ENCODE measurements at regions of chr4 and their contacts with region 1.

Region 1: DNA sequence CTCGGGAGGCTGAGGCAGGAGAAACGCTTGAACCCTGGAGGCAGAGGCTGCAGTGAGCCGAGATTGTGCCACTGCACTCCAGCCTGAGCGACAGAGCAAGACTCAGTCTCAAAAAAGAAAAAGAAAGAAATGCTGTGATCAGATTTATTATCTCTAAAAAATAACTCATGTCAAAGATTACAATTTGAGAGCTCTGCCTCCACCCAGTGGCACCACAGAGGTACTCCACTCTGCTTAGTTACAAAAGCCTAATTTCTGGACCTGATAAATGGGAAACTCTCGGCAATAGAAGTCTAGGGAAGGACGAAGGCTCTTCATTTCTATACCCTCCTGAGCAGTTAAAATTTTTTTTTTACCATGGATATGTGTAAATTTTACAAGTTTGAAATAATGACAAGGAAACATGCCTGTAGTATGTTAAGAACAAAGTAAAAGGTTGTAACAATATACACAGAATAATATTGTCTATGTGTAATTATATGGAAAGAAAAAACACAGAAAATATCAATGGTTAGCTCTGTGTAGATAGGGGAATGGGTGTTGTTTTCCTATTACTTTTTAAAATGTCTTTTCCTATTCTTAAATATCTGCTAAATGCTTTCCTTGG is 149.8 kb downstream of the STIM2 start:
- DNase-seq: peak; percentile 77
- H3K4me3 Mint-ChIP-seq: no peak overlapping the region
- H3K27ac Mint-ChIP-seq: peak overlapping the region; percentile 53
- H3K4me1 Mint-ChIP-seq: peaks cover 25% of the 10 kb centered on the region
- H3K27me3 Mint-ChIP-seq: no peaks in the 10 kb centered on the region

Region 2: DNA sequence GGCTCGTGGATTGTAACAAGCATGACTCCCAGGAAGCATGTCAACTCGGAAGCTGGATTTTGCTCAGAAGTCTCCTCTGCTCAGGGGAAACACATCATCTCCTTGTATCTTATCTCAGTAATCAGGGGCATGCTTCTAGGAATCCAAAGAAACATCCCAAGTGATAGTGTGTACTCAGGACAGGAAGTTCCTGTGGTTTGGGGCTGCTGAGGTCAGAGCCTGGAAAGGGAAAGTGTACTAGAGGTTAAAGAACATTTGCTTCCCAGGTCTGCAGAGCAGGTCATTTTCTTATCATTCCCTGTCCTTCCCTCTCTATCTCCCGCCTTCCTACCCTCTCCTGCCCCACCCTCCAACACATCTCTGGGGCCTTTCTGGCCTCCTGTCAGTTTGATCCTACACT is 1316.0 kb before region 1 on chr4:
- CTCF ChIA-PET with region 1: no interaction called
- intact Hi-C with region 1: no loop called
- DNase-seq: no peak
- H3K4me3 Mint-ChIP-seq: no peak overlapping the region
- H3K27ac Mint-ChIP-seq: no peak overlapping the region
- H3K4me1 Mint-ChIP-seq: no peaks in the 10 kb centered on the region
- H3K27me3 Mint-ChIP-seq: peaks cover 3% of the 10 kb centered on the region

Region 3: DNA sequence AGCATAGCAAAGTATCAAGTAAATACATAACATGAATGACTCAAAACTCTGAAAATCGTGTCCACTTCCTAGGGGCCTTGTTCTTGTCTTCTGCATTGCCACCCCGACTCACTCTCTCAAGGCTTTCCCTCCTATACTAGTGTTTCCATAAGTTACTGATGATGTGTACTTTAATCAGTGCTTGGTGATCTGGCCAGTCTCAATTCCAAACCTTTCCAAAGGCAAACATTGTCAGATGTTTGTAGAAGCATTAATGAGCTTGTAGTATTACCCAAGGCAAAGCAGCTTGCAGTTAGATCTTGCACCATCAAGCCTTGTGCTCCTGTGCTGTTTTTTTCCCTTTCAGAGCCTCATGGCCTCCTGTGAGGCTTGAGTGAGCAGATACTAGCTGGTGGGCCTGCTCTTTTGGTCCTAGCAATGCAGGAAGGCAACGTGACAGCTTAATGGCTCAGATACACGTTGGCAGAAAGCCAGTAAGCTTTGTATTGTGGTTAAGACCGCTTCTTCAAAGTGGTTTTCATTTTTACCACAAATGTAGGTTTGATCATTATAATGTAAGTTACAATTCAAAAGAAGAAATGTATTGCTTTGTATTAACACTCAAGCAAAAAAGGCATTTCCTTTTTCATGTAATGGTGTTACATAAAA is 637.8 kb before region 1 on chr4:
- CTCF ChIA-PET with region 1: no interaction called
- intact Hi-C with region 1: no loop called
- DNase-seq: peak; percentile 50
- H3K4me3 Mint-ChIP-seq: no peak overlapping the region
- H3K27ac Mint-ChIP-seq: no peak overlapping the region
- H3K4me1 Mint-ChIP-seq: peaks cover 59% of the 10 kb centered on the region
- H3K27me3 Mint-ChIP-seq: no peaks in the 10 kb centered on the region

Region 4: DNA sequence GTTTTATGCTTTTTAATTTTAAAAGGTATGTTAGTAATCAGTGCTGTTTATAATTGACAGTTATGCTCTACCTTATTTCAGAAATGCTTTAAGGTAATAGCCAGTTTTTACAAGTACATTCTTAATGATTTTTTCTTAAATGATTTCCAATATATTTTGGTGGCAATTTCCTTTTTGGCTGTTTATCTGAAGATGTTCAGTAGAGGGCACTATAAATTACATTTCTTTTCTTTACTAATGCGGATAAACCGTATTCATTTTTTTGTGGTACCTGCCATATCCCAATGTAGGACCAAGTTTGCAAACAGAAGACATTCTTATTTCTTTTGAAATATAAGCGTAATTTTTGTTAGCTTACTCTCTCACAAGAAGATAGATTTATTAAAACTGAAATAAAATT is 585.6 kb before region 1 on chr4:
- CTCF ChIA-PET with region 1: no interaction called
- intact Hi-C with region 1: loop called (anchors 5 kb)
- DNase-seq: no peak
- H3K4me3 Mint-ChIP-seq: no peak overlapping the region
- H3K27ac Mint-ChIP-seq: no peak overlapping the region
- H3K4me1 Mint-ChIP-seq: peaks cover 3% of the 10 kb centered on the region
- H3K27me3 Mint-ChIP-seq: no peaks in the 10 kb centered on the region

Region 5: GRCh38 chr4:26719954-26720552 is 290.4 kb before region 1 on chr4:
- CTCF ChIA-PET with region 1: interaction called, 5 read pairs
- intact Hi-C with region 1: loop called (anchors 5 kb)
- DNase-seq: no peak
- H3K4me3 Mint-ChIP-seq: no peak overlapping the region
- H3K27ac Mint-ChIP-seq: no peak overlapping the region
- H3K4me1 Mint-ChIP-seq: peaks cover 10% of the 10 kb centered on the region
- H3K27me3 Mint-ChIP-seq: no peaks in the 10 kb centered on the region

Region 6: GRCh38 chr4:26787461-26788340 is 222.7 kb before region 1 on chr4:
- CTCF ChIA-PET with region 1: interaction called, 6 read pairs
- intact Hi-C with region 1: loop called (anchors 1 kb)
- DNase-seq: peak; percentile 77
- H3K4me3 Mint-ChIP-seq: no peak overlapping the region
- H3K27ac Mint-ChIP-seq: no peak overlapping the region
- H3K4me1 Mint-ChIP-seq: peaks cover 13% of the 10 kb centered on the region
- H3K27me3 Mint-ChIP-seq: peaks cover 2% of the 10 kb centered on the region

Region 7: GRCh38 chr4:27304751-27305150 is 294.3 kb after region 1 on chr4:
- CTCF ChIA-PET with region 1: no interaction called
- intact Hi-C with region 1: no loop called
- DNase-seq: no peak
- H3K4me3 Mint-ChIP-seq: no peak overlapping the region
- H3K27ac Mint-ChIP-seq: no peak overlapping the region
- H3K4me1 Mint-ChIP-seq: no peaks in the 10 kb centered on the region
- H3K27me3 Mint-ChIP-seq: peaks cover 2% of the 10 kb centered on the region

Region 8: DNA sequence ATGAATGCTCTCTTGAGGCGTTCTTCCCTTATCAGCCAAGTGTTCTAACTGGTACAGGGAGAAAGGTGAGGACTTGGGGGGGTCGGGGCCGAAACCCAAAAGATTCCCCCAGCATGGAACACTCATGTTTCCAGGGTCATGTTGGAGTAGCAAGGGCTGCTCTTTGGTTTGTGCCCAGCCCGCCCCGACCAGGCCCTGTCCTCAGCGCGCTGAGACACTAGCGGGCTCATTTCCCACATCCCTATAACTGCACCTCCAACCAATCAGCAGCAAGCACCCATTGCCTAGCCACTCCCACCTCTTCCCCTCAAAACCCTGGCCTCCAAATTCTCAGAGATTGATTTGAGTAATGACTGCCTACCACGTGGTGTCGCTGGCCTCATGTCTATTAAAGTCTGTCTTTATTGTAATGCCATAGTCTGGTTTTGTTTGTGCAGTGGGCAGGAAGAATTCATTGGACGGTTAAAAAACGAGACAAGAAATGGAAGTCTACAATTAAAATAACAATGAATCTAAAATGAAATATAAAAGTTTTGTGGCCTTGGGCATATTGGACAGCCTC is 1778.6 kb after region 1 on chr4:
- CTCF ChIA-PET with region 1: no interaction called
- intact Hi-C with region 1: no loop called
- DNase-seq: no peak
- H3K4me3 Mint-ChIP-seq: no peak overlapping the region
- H3K27ac Mint-ChIP-seq: no peak overlapping the region
- H3K4me1 Mint-ChIP-seq: no peaks in the 10 kb centered on the region
- H3K27me3 Mint-ChIP-seq: no peaks in the 10 kb centered on the region

Measured in activated naive CD4-positive, alpha-beta T cell treated with anti-CD3 and anti-CD28 coated beads for 36 hours (primary cell).